ENCODE measurements at regions of chr20 and their contacts with region 1.

Region 1: DNA sequence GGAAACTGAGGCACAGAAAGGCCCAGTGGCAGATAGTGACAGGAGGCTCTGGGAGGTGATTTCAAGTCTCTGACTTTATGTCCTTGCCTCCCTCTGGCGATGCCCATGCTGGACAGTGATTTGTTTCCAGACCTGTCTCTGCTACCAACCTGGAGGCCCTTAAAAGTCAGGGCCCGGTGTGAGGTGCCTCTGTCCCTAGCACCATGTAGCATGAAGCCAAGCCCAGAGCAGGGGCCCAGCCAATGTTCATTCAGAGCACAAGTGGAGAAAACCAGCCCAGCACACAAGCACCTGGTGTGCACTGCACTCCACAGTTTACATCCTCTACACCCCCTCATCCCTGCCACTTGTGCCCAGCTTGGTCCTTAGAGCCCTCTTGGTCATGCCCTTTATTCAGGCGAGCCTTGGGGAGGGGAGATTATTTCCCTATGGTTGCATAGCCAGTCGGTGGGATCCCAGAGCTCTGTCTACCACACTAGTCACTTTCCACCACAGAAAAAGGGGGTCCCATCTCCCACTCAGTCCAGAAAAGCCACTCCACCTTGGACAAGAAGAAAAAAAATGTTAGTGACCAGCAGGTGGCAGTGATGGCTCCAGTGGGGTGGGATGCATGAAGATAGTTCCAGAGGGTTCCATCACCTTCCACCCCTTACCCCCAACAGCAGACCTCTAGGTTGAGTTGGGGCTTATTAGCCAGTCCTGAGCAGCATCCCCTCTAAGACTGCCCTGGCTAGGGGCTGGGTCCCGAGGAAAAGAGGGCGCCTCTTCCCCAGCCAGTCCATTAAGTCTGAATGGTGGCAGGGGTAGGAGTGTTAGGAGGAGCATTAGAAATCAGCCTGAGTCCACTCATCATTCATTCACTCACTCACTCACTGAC is 30.9 kb downstream of the KIAA1755 start:
- DNase-seq: no peak
- H3K4me3 ChIP-seq: no peak overlapping the region
- H3K27ac ChIP-seq: no peak overlapping the region
- H3K27me3 ChIP-seq: no peaks in the 10 kb centered on the region
- CTCF ChIP-seq: peak; percentile 68

Region 2: DNA sequence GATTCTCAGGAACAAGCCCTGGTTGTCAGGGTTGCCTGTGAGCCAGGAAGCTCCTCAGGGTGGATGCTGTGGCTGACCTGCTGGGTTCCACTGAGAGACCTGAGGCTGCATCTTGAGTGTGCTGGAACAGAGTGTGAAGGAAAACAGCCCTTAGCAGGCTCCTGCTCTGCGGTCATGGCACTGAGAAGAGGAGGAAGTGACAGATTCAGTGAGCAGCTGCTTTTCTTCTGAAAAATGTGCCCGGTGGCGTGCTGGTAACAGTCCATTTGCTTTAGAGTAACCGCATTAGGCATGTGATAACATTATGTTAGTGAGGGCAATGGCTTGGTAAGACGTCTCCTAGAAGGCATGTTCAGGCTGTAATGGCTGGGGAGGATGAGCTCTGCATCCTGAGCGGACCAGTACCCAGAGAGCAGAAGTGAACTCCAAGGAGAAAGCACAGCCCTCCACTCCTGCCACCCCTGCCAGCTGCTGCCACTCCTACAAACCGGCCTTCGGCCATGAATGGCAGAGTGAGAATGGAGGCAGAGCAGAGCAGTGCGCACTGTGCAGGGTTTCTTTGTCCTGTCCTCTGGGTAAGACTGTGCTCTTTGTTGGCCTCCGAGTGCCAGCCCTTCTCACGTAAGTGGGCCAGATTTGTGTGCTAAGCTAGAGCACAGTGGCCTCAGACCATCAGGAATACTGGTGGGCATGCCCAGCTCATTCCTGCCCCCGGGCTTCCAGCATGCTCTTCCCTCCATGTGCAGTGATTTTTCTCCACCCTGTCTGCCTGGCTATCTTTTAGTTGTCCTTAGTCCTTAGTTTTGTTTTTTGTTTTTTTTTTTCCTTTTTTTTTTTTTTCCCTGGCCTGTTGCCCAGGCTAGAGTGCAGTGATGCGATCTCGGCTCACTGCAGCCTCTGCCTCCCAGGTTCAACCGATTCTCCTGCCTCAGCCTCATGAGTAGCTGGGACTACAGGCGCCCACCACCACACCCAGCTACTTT is 424.7 kb before region 1 on chr20:
- CTCF ChIA-PET with region 1: no interaction called
- POLR2A ChIA-PET with region 1: no interaction called
- DNase-seq: no peak
- H3K4me3 ChIP-seq: no peak overlapping the region
- H3K27ac ChIP-seq: no peak overlapping the region
- H3K27me3 ChIP-seq: no peaks in the 10 kb centered on the region
- CTCF ChIP-seq: no peak

Region 3: GRCh38 chr20:38073307-38074071 is 156.1 kb before region 1 on chr20:
- CTCF ChIA-PET with region 1: interaction called, 10 read pairs
- POLR2A ChIA-PET with region 1: no interaction called
- DNase-seq: peak; percentile 93
- H3K4me3 ChIP-seq: no peak overlapping the region; the same call in 1 of the 2 replicates
- H3K27ac ChIP-seq: peak overlapping the region; percentile 60
- H3K27me3 ChIP-seq: no peaks in the 10 kb centered on the region
- CTCF ChIP-seq: peak; percentile 87

Region 4: GRCh38 chr20:38304845-38305447 is 75.3 kb after region 1 on chr20:
- CTCF ChIA-PET with region 1: interaction called, 17 read pairs
- POLR2A ChIA-PET with region 1: no interaction called
- DNase-seq: no peak
- H3K4me3 ChIP-seq: no peak overlapping the region
- H3K27ac ChIP-seq: no peak overlapping the region
- H3K27me3 ChIP-seq: peaks cover 20% of the 10 kb centered on the region
- CTCF ChIP-seq: peak; percentile 65

Region 5: DNA sequence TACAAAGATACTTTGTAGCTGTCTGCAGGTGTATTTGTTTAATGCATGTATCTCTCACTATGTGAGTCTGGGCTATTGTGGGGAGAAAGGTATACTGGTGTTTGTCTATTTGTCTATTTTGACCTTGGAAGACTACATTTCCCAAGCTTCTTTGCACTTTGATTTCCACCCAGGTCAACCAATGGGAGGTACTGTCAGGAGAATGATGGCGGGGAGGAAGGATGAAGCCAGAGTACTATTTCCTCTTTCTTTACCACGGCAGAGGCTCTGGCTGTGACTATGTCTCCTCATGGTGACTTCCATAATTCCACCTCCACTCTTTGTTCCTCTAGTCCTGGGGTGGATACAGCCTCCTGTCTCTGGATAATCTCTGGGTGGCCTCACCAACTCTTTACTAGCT is 139.8 kb after region 1 on chr20:
- CTCF ChIA-PET with region 1: no interaction called
- POLR2A ChIA-PET with region 1: no interaction called
- DNase-seq: no peak
- H3K4me3 ChIP-seq: no peak overlapping the region
- H3K27ac ChIP-seq: no peak overlapping the region
- H3K27me3 ChIP-seq: peaks cover 37% of the 10 kb centered on the region
- CTCF ChIP-seq: no peak

Region 6: DNA sequence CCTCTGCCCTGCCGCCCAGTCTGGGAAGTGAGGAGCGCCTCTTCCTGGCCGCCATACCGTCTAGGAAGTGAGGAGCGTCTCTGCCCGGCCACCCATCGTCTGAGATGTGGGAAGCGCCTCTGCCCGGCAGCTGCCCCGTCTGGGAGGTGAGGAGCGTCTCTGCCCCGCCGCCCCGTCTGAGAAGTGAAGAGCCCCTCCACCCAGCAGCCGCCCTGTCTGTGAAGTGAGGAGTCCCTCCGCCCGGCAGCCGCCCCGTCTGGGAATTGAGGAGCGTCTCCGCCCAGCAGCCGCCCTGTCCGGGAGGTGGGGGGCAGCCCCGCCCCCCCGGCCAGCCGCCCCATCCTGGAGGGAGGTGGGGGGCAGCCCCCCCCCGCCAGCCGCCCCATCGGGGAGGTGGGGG is 177.7 kb after region 1 on chr20:
- CTCF ChIA-PET with region 1: interaction called, 29 read pairs
- POLR2A ChIA-PET with region 1: no interaction called
- DNase-seq: no peak
- H3K4me3 ChIP-seq: no peak overlapping the region
- H3K27ac ChIP-seq: no peak overlapping the region
- H3K27me3 ChIP-seq: no peaks in the 10 kb centered on the region
- CTCF ChIP-seq: no peak